A549 (cell line): ENCODE measurements at regions of chr17 and their contacts with region 1.

Region 1: GRCh38 chr17:39209317-39210092 is 9.4 kb downstream of the RPL19 start:
- DNase-seq: no peak
- ATAC-seq: no peak
- H3K4me3 ChIP-seq: peak overlapping the region; percentile 25; the same call in 2 of the 3 replicates
- H3K27ac ChIP-seq: peak overlapping the region; percentile 64 to 73; a peak in 4 of 6 replicates
- H3K4me1 ChIP-seq: peaks cover 34% of the 10 kb centered on the region
- CTCF ChIP-seq: no peak
- EP300 ChIP-seq: no peak
- POLR2A ChIP-seq: no peak
- RAD21 ChIP-seq: no peak

Region 2: DNA sequence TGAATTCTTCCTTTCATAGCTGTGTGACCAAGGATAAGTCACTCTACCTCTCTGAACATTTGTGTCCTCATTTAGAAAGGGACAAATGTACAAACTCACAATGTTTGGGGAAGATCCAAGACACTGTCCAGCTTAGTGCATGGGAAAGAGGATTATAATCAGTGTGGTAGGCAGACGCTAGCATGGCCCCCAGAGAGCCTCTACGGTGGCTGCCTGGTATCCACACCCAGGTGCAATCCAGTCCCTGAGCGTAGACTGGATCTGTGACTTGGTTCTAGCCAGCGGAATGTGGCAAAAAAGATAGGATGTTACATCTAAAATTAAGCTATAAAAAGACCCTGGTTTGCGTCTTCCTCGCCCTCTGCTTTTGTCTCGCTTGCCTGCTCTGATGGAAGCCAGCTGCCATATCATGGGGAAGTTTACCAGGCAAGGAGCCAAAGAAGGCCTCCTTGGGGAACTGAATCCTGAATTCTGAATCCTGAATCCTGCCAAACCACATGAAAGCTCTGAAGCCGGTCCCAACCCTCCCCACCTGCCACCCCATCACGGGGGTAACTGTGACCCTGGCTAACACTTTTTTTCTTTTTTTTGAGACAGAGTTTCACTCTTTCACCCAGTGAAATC is 109.7 kb before region 1 on chr17:
- CTCF ChIA-PET with region 1: no interaction called
- POLR2A ChIA-PET with region 1: no interaction called
- DNase-seq: no peak
- ATAC-seq: no peak
- H3K4me3 ChIP-seq: no peak overlapping the region
- H3K27ac ChIP-seq: no peak overlapping the region
- H3K4me1 ChIP-seq: no peaks in the 10 kb centered on the region
- CTCF ChIP-seq: no peak
- EP300 ChIP-seq: no peak
- POLR2A ChIP-seq: no peak
- RAD21 ChIP-seq: no peak

Region 3: GRCh38 chr17:39164675-39165143 is 44.8 kb before region 1 on chr17:
- CTCF ChIA-PET with region 1: interaction called, 25 read pairs
- POLR2A ChIA-PET with region 1: no interaction called
- DNase-seq: peak; percentile 91 to 99
- ATAC-seq: peak; percentile 81 to 92
- H3K4me3 ChIP-seq: peak overlapping the region; percentile 16; the same call in 2 of the 3 replicates
- H3K27ac ChIP-seq: peak overlapping the region in 1 of 2 experiments; percentile 51; a peak in 3 of 6 replicates
- H3K4me1 ChIP-seq: peaks cover 6% of the 10 kb centered on the region; the same call in 2 of the 3 replicates
- CTCF ChIP-seq: peak; percentile 84
- EP300 ChIP-seq: no peak
- POLR2A ChIP-seq: no peak
- RAD21 ChIP-seq: peak; percentile 42 to 61; a peak in 3 of 5 replicates

Region 4: GRCh38 chr17:39194089-39194984 is 15.2 kb before region 1 on chr17:
- CTCF ChIA-PET with region 1: interaction called, 20 read pairs
- POLR2A ChIA-PET with region 1: interaction called, 16 read pairs
- DNase-seq: peak; percentile 73 to 84
- ATAC-seq: peak; percentile 44 to 63
- H3K4me3 ChIP-seq: no peak overlapping the region
- H3K27ac ChIP-seq: peak overlapping the region in 1 of 2 experiments; percentile 96; a peak in 1 of 6 replicates
- H3K4me1 ChIP-seq: peaks cover 35% of the 10 kb centered on the region
- CTCF ChIP-seq: peak; percentile 33; the same call in 2 of the 3 replicates
- EP300 ChIP-seq: no peak
- POLR2A ChIP-seq: no peak
- RAD21 ChIP-seq: peak in 1 of 2 experiments; percentile 36; a peak in 1 of 5 replicates

Region 5: DNA sequence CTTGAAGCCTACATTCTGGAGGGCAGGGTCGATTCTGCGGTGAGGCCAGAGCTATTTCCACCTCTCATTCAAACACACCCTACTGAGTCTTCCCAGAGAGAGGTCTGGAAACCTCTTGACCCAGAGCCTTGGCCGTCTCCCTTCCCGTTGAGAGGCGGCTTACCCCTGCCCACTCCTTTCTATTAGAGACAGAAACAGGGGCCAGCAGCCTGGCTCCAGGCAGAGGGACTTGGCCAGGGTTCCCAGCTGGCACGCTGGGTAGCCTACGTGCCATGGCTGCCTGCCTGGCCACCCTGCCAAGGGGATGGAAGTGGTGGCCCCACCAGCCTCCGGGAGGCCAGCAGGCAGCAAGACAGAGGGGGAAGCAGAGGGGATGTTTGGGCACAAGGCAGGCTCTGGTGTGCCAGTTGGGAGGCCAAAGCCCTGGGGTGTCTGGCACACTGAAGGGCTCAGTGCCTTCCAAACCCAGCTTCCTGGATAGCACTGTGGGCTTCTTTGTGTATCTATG is 10.2 kb after region 1 on chr17:
- CTCF ChIA-PET with region 1: interaction called, 105 read pairs
- POLR2A ChIA-PET with region 1: interaction called, 4 read pairs
- DNase-seq: no peak
- ATAC-seq: no peak
- H3K4me3 ChIP-seq: no peak overlapping the region
- H3K27ac ChIP-seq: no peak overlapping the region; a peak in 1 of 6 replicates
- H3K4me1 ChIP-seq: peaks cover 15% of the 10 kb centered on the region; the same call in 1 of the 3 replicates
- CTCF ChIP-seq: no peak
- EP300 ChIP-seq: no peak
- POLR2A ChIP-seq: no peak
- RAD21 ChIP-seq: no peak

Region 6: DNA sequence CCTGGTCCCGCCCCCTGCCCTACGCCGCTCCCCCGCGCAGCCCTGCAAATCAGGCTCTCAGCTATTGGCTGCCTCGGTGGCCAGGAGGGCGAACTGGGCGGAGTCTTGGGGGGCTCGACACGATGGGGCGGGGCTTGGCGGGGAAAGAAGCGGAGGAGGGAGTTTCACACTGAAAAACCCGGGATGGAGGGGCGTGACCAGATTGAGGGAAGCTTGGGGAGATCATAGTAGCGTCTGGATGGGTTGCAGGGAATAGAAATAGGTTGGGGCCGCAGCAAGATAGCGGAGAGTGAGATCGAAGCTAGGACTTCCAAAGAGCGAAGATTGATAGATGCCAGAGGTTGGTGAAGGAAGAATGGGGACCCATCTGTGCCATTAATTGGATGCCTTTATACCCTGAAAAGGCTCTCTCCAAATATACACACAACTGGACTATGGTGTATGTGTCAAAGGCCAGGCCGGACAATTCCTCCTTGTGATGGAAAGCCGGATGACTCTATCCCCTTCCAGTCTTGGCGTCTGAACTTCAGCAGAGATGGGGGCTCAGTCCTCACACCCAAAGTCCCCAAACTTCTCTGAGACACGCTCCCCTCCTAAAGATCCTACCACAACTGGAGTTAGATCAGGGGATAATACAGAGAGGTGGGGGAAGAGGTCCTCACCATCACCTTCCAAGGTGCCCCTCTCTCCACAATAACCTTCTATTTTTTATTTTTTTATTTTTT is 16.6 kb after region 1 on chr17:
- CTCF ChIA-PET with region 1: interaction called, 1,140 read pairs
- POLR2A ChIA-PET with region 1: interaction called, 3 read pairs
- DNase-seq: peak; percentile 60 to 91
- ATAC-seq: peak; percentile 26 to 86; a peak in 5 of 6 replicates
- H3K4me3 ChIP-seq: peak overlapping the region; percentile 46
- H3K27ac ChIP-seq: peak overlapping the region; percentile 40 to 71; a peak in 5 of 6 replicates
- H3K4me1 ChIP-seq: peaks cover 28% of the 10 kb centered on the region
- CTCF ChIP-seq: no peak
- EP300 ChIP-seq: no peak
- POLR2A ChIP-seq: no peak
- RAD21 ChIP-seq: no peak

Region 7: DNA sequence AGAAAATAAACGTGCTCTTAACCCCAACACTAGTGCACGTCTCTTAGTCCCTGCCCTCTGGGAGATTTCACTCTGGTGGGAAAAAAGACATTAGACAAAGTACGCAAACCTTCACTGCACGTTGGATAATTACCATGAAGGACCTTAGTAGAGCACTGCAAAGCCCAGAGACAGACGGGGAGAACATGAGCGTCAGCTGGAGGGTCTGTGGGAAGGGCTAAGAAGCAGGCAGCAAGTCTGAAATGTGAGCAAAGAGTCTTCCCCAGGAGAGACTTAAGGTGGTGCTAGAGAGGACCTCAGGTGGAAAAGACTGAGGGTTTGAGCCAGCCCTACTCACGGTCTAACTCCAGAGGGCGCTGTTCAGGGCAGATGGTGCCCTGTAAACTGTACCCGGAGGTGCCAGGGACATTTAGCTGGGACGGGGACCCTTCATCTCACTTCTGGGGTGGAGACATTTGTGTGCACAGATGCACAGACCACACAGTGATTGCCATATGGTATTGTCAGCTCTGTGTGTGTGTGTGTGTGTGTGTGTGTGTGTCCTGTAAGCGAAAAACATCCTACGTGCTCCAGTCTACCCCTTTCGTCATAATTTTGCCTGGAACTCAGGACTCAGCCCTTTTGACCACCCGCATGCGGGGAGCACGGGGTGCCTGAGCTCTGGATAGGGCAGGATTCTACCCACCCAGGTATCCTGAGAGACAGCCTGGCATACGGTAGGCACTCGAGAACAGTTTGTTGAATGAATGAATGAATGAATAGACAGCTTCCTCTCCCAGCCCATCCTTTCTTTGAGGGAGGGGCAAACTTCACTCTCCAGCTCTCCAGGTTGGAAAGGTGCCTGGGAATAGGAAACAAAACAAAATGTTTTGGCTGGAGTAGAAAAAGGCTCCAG is 26.3 kb after region 1 on chr17:
- CTCF ChIA-PET with region 1: interaction called, 1,140 read pairs
- POLR2A ChIA-PET with region 1: interaction called, 10 read pairs
- DNase-seq: peak; percentile 89 to 92
- ATAC-seq: peak; percentile 68 to 85
- H3K4me3 ChIP-seq: no peak overlapping the region
- H3K27ac ChIP-seq: peak overlapping the region; percentile 45 to 61; a peak in 3 of 6 replicates
- H3K4me1 ChIP-seq: peaks cover 48% of the 10 kb centered on the region
- CTCF ChIP-seq: peak; percentile 93
- EP300 ChIP-seq: no peak
- POLR2A ChIP-seq: no peak
- RAD21 ChIP-seq: peak; percentile 22 to 31; a peak in 1 of 5 replicates